ENCODE measurements at regions of chr17 and their contacts with region 1.

Region 1: DNA sequence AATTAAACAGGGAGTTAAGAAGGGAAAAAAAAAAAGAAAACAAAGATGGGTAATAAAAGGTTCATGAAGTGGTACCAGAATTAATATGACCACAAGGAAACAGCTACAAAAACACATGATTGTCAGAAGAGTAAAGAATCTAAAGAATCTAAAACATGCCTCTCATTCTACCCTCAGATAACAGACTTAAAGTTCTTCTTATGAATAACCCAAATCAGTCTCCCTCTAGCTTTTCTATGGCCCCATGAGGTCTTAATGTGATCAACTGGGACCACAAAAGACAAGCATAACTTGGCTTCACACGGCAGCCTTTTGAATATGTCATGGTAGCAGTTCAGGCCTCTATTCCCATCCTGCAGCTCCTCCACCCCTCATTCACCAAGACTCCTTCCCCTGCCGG is 6.9 kb downstream of the MYH10 start:
- DNase-seq: no peak
- ATAC-seq: no peak
- H3K4me3 ChIP-seq: no peak overlapping the region
- H3K4me3 Mint-ChIP-seq: no peak overlapping the region
- H3K27ac ChIP-seq: no peak overlapping the region
- H3K27ac Mint-ChIP-seq: no peak overlapping the region
- H3K4me1 ChIP-seq: no peaks in the 10 kb centered on the region
- H3K4me1 Mint-ChIP-seq: no peaks in the 10 kb centered on the region
- H3K27me3 ChIP-seq: peaks cover 11 to 26% of the 10 kb centered on the region in 2 experiments
- H3K27me3 Mint-ChIP-seq: peaks cover 49% of the 10 kb centered on the region
- CTCF ChIP-seq: no peak

Region 2: DNA sequence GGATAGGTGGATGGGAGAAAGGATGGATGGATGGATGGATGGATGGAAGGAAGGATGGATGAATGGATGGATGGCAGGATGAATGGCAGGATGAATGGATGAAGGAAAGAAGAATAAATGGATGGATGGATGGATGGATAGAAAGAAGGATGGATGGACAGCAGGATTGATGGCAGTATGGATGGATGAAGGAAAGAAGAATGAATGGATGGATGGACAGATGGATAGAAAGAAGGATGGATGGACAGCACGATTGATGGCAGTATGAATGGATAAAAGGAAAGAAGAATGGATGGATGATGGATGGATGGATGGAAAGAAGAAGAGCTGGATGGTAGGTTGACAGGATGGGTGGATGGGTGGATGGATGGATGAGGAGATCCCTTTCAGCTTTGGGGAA is 16.1 kb after region 1 on chr17:
- CTCF ChIA-PET with region 1: no interaction called
- POLR2A ChIA-PET with region 1: no interaction called
- intact Hi-C with region 1: loop called in 1 of 2 experiments (anchors 2 kb)
- DNase-seq: no peak
- ATAC-seq: no peak
- H3K4me3 ChIP-seq: no peak overlapping the region
- H3K4me3 Mint-ChIP-seq: no peak overlapping the region
- H3K27ac ChIP-seq: no peak overlapping the region
- H3K27ac Mint-ChIP-seq: no peak overlapping the region
- H3K4me1 ChIP-seq: no peaks in the 10 kb centered on the region
- H3K4me1 Mint-ChIP-seq: no peaks in the 10 kb centered on the region
- H3K27me3 ChIP-seq: peaks cover 0 to 5% of the 10 kb centered on the region in 2 experiments
- H3K27me3 Mint-ChIP-seq: peaks cover 12% of the 10 kb centered on the region
- CTCF ChIP-seq: no peak

Region 3: DNA sequence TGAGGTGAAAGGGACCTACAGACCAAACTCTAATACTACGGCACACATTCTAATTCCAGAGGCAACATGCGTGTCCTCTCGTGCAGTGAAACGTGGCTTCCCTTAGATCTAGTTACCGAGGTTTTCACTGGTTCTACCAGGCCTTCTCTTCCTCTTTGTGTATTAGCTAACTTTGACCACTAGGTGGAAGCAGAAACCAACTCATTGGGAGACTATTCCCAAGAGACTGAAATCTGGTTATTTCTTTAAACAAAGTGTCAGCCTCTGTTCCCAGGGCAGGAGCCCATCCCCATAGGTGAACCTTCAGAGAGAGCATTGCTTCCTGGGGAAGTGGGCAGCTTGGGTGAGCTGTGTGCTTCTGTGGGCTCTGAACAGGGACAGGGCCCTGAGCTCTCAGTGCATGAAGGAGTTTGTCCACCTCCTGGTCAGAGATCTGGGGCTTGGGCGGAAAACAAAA is 1301.2 kb after region 1 on chr17:
- CTCF ChIA-PET with region 1: no interaction called
- POLR2A ChIA-PET with region 1: no interaction called
- intact Hi-C with region 1: no loop called
- DNase-seq: peak in 3 of 14 experiments; percentile 55 to 67 (median 61)
- ATAC-seq: no peak
- H3K4me3 ChIP-seq: no peak overlapping the region
- H3K4me3 Mint-ChIP-seq: no peak overlapping the region
- H3K27ac ChIP-seq: no peak overlapping the region
- H3K27ac Mint-ChIP-seq: no peak overlapping the region
- H3K4me1 ChIP-seq: no peaks in the 10 kb centered on the region
- H3K4me1 Mint-ChIP-seq: no peaks in the 10 kb centered on the region
- H3K27me3 ChIP-seq: no peaks in the 10 kb centered on the region
- H3K27me3 Mint-ChIP-seq: no peaks in the 10 kb centered on the region
- CTCF ChIP-seq: peak; percentile 61

Measured in CD4-positive, alpha-beta T cell (primary cell).